ENCODE measurements at regions of chr6 and their contacts with region 1.

Region 1: GRCh38 chr6:52598123-52598823 is 21.4 kb upstream of the TRAM2 start:
- DNase-seq: peak; percentile 73 to 83 (median 82)
- ATAC-seq: peak; percentile 62 to 77
- H3K4me3 ChIP-seq: peak overlapping the region; percentile 7
- H3K27ac ChIP-seq: no peak overlapping the region
- H3K4me1 ChIP-seq: peaks cover 10% of the 10 kb centered on the region
- H3K27me3 ChIP-seq: no peaks in the 10 kb centered on the region

Region 2: GRCh38 chr6:52640170-52640569 is 41.9 kb after region 1 on chr6:
- intact Hi-C with region 1: loop called in 1 of 4 experiments (anchors 10 kb)
- DNase-seq: peak in 1 of 3 donors; percentile 24
- ATAC-seq: peak; percentile 31 to 46
- H3K4me3 ChIP-seq: no peak overlapping the region
- H3K27ac ChIP-seq: no peak overlapping the region
- H3K4me1 ChIP-seq: no peaks in the 10 kb centered on the region
- H3K27me3 ChIP-seq: no peaks in the 10 kb centered on the region

Region 3: GRCh38 chr6:52664186-52664990 is 66.1 kb after region 1 on chr6:
- intact Hi-C with region 1: loop called in 2 of 4 experiments (anchors 5 to 10 kb)
- DNase-seq: peak; percentile 89 to 96 (median 94)
- ATAC-seq: peak; percentile 99
- H3K4me3 ChIP-seq: peak overlapping the region; percentile 87
- H3K27ac ChIP-seq: peak overlapping the region; percentile 71
- H3K4me1 ChIP-seq: peaks cover 8% of the 10 kb centered on the region
- H3K27me3 ChIP-seq: no peaks in the 10 kb centered on the region

Region 4: DNA sequence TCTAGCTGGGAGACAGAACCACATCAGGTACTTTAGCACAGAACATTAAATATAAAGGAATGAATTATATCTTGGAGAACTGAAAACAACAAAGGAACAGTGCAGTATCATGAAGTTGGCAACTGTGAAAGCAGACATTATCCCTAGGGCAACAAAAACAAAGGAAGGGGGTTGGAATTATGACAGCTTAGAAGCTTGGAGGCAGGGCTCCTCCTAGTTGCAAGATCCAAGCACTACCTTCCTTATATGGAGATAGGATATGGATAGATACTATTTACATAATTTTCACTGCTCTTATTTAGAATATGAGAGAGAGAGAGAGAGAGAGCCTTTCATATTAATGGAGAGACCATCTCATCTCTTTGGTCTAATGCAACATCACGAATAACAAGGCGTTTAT is 99.6 kb after region 1 on chr6:
- intact Hi-C with region 1: no loop called
- DNase-seq: no peak
- ATAC-seq: no peak
- H3K4me3 ChIP-seq: no peak overlapping the region
- H3K27ac ChIP-seq: no peak overlapping the region
- H3K4me1 ChIP-seq: no peaks in the 10 kb centered on the region
- H3K27me3 ChIP-seq: no peaks in the 10 kb centered on the region

Region 5: GRCh38 chr6:53703047-53703446 is 1104.8 kb after region 1 on chr6:
- intact Hi-C with region 1: no loop called
- DNase-seq: no peak
- ATAC-seq: peak in 1 of 2 donors; percentile 45
- H3K4me3 ChIP-seq: no peak overlapping the region
- H3K27ac ChIP-seq: no peak overlapping the region
- H3K4me1 ChIP-seq: no peaks in the 10 kb centered on the region
- H3K27me3 ChIP-seq: no peaks in the 10 kb centered on the region

Measured in right cardiac atrium (tissue), 5 donors.